CD4-positive, alpha-beta memory T cell (primary cell): ENCODE measurements at regions of chr20 and their contacts with region 1.

Region 1: DNA sequence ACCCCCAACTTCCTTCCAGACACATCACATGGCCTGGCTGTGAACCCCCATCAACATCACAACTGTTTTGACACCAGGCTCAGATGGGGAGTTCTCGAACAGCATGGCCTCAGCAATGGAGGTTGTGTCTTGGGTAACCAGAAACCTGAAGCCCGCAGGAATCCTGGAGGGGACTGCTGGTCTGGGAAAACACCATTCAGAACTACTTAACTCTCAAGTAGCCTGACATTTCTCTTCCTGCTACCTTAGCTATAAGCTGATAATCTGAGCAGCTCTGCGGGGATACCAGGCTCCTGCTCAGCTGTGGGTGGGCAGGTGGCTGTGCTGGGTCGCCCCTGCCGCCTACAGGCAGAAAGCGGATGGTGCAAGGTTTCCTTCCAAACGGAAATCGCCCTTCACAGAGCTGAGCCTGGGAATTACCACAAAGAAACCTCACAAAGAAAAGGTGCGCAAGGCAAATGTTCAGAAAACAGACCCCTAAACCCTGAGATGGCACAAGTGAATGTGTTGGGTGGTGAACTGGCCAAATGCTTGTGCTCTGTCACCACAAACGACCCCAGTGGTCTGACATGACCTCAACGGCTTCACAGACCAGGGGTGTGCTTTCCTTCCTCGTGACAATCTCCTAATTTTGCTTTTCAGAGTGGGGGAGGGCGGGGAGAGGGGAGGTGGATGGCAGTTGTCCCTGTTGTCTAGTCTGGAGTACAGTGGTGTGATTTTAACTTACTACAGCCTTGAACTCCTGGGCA is 29.5 kb downstream of the SNX5 start:
- DNase-seq: peak; percentile 33 to 56 (median 48)
- H3K4me3 ChIP-seq: no peak overlapping the region
- H3K4me3 Mint-ChIP-seq: peak overlapping the region in 5 of 8 donors; percentile 20 to 62 (median 47)
- H3K27ac ChIP-seq: no peak overlapping the region
- H3K27ac Mint-ChIP-seq: peak overlapping the region in 4 of 7 donors; percentile 27 to 62 (median 37)
- H3K4me1 ChIP-seq: peaks cover 13% of the 10 kb centered on the region
- H3K4me1 Mint-ChIP-seq: peaks cover 4 to 14% (median 11%) of the 10 kb centered on the region in 4 donors
- H3K27me3 ChIP-seq: no peaks in the 10 kb centered on the region
- H3K27me3 Mint-ChIP-seq: no peaks in the 10 kb centered on the region

Region 2: GRCh38 chr20:17952692-17953684 is 13.9 kb after region 1 on chr20:
- CTCF ChIA-PET with region 1: interaction called, 19 read pairs
- POLR2A ChIA-PET with region 1: no interaction called
- intact Hi-C with region 1: no loop called
- DNase-seq: no peak
- H3K4me3 ChIP-seq: no peak overlapping the region
- H3K4me3 Mint-ChIP-seq: no peak overlapping the region
- H3K27ac ChIP-seq: no peak overlapping the region
- H3K27ac Mint-ChIP-seq: peak overlapping the region in 5 of 7 donors; percentile 18 to 71 (median 55)
- H3K4me1 ChIP-seq: peaks cover 28% of the 10 kb centered on the region
- H3K4me1 Mint-ChIP-seq: peaks cover 12 to 41% (median 23%) of the 10 kb centered on the region in 4 donors
- H3K27me3 ChIP-seq: no peaks in the 10 kb centered on the region
- H3K27me3 Mint-ChIP-seq: no peaks in the 10 kb centered on the region

Region 3: GRCh38 chr20:17958373-17959256 is 19.6 kb after region 1 on chr20:
- CTCF ChIA-PET with region 1: interaction called, 51 read pairs
- POLR2A ChIA-PET with region 1: interaction called, 4 read pairs
- intact Hi-C with region 1: no loop called
- DNase-seq: no peak
- H3K4me3 ChIP-seq: peak overlapping the region in 1 of 2 donors; percentile 4
- H3K4me3 Mint-ChIP-seq: peak overlapping the region in 6 of 8 donors; percentile 36 to 76 (median 66)
- H3K27ac ChIP-seq: peak overlapping the region; percentile 33
- H3K27ac Mint-ChIP-seq: peak overlapping the region; percentile 26 to 99 (median 82)
- H3K4me1 ChIP-seq: peaks cover 84% of the 10 kb centered on the region
- H3K4me1 Mint-ChIP-seq: peaks cover 54 to 83% (median 72%) of the 10 kb centered on the region in 4 donors
- H3K27me3 ChIP-seq: no peaks in the 10 kb centered on the region
- H3K27me3 Mint-ChIP-seq: no peaks in the 10 kb centered on the region

Region 4: DNA sequence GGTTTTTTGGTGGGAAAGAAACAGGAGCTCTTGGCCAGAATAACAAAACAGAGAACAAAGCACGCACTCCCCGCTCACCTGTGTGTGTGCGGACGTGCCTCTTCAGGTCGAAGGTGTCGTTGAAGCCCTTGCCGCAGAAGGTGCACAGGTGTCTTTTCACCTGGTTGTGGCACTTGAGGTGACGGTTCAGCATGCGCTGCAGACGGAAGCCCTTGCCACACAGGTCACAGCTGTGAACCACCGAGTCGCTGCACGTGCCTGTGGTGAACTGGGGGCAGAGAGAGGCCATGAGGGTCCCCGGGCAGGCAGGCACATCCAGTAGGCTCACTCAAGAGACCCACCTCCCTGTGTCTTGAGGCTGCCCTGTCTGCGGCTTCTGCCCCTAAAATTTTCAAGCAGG is 102.4 kb after region 1 on chr20:
- CTCF ChIA-PET with region 1: no interaction called
- POLR2A ChIA-PET with region 1: no interaction called
- intact Hi-C with region 1: no loop called
- DNase-seq: no peak
- H3K4me3 ChIP-seq: no peak overlapping the region
- H3K4me3 Mint-ChIP-seq: no peak overlapping the region
- H3K27ac ChIP-seq: no peak overlapping the region
- H3K27ac Mint-ChIP-seq: no peak overlapping the region
- H3K4me1 ChIP-seq: no peaks in the 10 kb centered on the region
- H3K4me1 Mint-ChIP-seq: no peaks in the 10 kb centered on the region
- H3K27me3 ChIP-seq: no peaks in the 10 kb centered on the region
- H3K27me3 Mint-ChIP-seq: peaks cover 18 to 26% of the 10 kb centered on the region in 2 donors